Heart left ventricle (tissue), 16 donors: ENCODE measurements at regions of chr3 and their contacts with region 1.

Region 1: DNA sequence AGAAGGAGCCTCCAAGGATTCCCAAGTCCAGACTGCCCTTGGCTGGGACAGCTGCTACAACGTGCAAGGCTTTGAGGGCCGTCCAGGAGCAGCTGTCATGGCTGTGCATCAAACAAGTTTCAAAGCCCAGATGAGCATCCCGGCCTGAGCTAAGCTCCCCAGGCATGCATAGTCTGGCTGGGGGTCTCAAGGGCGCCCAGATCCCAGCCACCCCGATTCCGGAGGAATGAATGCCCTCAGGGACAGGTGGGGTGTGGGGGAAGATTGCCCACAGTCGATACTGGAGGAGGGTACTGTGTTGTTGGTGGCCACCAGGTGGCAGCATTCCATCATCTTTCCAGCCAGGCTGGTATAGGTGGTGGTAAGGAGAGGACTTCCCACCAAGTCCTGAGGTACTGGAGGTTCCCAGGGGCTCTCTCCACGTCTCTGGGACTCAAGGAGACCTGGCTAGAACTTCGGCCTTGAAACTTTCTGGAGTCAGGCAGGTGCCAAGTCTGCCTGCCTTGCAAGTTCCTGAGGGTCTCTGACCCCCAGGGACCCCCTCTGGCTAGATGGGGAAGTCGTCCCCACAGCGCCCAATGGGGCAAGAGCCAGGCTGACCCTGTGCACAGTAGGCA is 32.8 kb downstream of the RBM5 start:
- DNase-seq: peak; percentile 68 to 77 (median 72)
- ATAC-seq: peak; percentile 71 to 88 (median 84)
- H3K4me3 ChIP-seq: no peak overlapping the region
- H3K27ac ChIP-seq: no peak overlapping the region
- H3K4me1 ChIP-seq: peaks cover 0 to 22% (median 2%) of the 10 kb centered on the region in 12 donors
- H3K27me3 ChIP-seq: no peaks in the 10 kb centered on the region
- CTCF ChIP-seq: peak; percentile 76 to 89 (median 84)
- POLR2A ChIP-seq: peak in 1 of 2 donors; percentile 13

Region 2: GRCh38 chr3:50170689-50171088 is 49.2 kb after region 1 on chr3:
- intact Hi-C with region 1: loop called in 1 of 10 experiments (anchors 5 kb)
- DNase-seq: peak; percentile 69 to 86 (median 82)
- ATAC-seq: peak; percentile 57 to 82 (median 62)
- H3K4me3 ChIP-seq: no peak overlapping the region
- H3K27ac ChIP-seq: peak overlapping the region; percentile 47 to 92 (median 83)
- H3K4me1 ChIP-seq: peaks cover 21 to 74% (median 61%) of the 10 kb centered on the region in 12 donors
- H3K27me3 ChIP-seq: no peaks in the 10 kb centered on the region
- CTCF ChIP-seq: no peak
- POLR2A ChIP-seq: no peak

Region 3: DNA sequence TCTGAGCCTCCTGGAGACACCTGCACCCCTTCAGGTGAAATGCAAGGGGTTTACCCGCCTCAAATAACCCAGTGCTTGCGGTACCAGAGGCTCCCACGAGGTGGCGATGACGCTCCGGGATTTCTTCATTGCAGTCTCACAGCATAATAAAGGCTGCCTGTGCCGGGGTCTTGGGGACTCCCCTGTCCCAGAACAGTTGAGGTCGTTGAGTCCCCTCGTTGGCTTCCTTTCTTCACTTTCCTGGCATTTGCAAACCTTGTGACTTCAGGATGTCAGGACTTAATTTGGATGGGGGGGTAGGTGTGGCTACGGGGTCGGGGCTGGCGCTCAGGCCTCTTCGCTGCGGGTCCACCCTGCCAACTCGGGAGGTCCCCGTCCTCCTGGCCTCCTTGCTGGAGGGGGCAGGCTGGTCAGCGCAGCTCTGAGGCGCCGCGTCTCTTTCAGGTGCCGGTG is 71.2 kb after region 1 on chr3:
- intact Hi-C with region 1: loop called (anchors 1 to 2 kb)
- DNase-seq: peak in 4 of 5 donors; percentile 44 to 64 (median 60)
- ATAC-seq: peak in 2 of 4 donors; percentile 17 to 28
- H3K4me3 ChIP-seq: no peak overlapping the region
- H3K27ac ChIP-seq: no peak overlapping the region
- H3K4me1 ChIP-seq: peaks cover 3 to 29% (median 14%) of the 10 kb centered on the region in 12 donors
- H3K27me3 ChIP-seq: peaks cover 12 to 35% (median 21%) of the 10 kb centered on the region in 9 donors
- CTCF ChIP-seq: peak; percentile 82 to 94 (median 88)
- POLR2A ChIP-seq: no peak